ENCODE measurements at regions of chr12 and their contacts with region 1.

Region 1: DNA sequence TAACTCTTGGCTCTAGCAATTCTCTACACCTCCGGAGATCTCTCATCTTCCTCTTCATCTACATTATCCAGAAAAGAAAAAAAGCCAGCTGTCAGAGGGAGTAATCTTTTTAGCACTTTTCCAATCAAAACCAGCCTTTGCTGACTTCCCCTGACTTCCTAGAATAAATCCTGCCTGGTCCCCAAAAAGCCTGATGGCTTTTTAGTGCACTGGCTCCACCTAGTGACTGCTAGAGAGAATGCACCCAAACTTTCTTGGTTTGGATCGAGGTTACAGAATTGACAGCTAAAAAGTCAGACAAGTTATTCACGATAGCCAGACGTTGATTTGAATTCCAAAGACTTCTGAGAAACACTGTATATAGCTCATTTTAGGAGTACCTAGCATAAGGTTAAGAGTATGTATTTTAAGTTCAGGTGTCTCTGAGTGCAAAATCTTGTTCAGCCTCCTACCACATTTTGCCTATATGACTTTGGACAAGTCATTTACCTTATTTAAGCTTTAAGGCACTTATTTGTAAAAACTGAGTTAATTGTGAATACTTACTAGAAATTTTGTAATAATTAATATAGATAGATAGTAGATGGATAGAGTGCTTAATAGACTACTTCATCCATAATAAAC is 185.7 kb upstream of the GRIN2B start:
- DNase-seq: peak; percentile 46 to 61
- H3K4me3 ChIP-seq: no peak overlapping the region
- H3K27ac ChIP-seq: no peak overlapping the region
- H3K4me1 ChIP-seq: no peaks in the 10 kb centered on the region
- H3K27me3 ChIP-seq: no peaks in the 10 kb centered on the region
- CTCF ChIP-seq: peak; percentile 98

Region 2: GRCh38 chr12:12992418-12993130 is 1174.5 kb before region 1 on chr12:
- CTCF ChIA-PET with region 1: no interaction called
- POLR2A ChIA-PET with region 1: no interaction called
- intact Hi-C with region 1: loop called (anchors 5 kb)
- DNase-seq: peak in 1 of 2 experiments; percentile 37
- H3K4me3 ChIP-seq: no peak overlapping the region
- H3K27ac ChIP-seq: peak overlapping the region; percentile 46
- H3K4me1 ChIP-seq: peaks cover 24% of the 10 kb centered on the region
- H3K27me3 ChIP-seq: no peaks in the 10 kb centered on the region
- CTCF ChIP-seq: no peak

Region 3: DNA sequence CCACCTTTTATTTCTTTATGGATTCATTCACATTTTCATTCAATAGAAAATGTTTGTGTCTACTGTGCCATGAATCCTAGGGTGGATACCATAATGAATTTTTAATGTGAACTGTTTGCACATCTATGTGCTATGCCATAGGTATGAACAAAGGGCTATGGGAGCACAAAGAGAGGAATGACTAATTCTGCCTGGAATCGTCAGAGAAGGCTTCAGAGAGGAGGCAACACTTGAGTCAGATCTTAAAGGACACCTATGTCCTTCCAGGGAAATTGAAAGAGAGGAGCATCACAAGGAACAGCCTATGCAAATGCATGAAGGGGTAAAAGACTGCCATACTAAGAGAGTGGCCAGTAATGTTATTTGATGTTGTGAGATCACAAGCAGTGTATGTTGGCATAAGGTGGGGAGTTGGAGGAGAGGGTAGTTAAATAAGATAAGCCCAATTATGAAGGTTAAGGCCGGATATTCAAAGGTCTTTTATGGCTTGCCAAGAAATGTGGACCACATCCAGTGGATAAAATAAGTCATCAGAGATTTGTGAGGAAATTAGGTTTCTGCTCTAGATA is 432.4 kb before region 1 on chr12:
- CTCF ChIA-PET with region 1: no interaction called
- POLR2A ChIA-PET with region 1: no interaction called
- intact Hi-C with region 1: loop called (anchors 5 kb)
- DNase-seq: no peak
- H3K4me3 ChIP-seq: no peak overlapping the region
- H3K27ac ChIP-seq: no peak overlapping the region
- H3K4me1 ChIP-seq: no peaks in the 10 kb centered on the region
- H3K27me3 ChIP-seq: no peaks in the 10 kb centered on the region; the same call in 1 of the 2 replicates
- CTCF ChIP-seq: no peak

Region 4: DNA sequence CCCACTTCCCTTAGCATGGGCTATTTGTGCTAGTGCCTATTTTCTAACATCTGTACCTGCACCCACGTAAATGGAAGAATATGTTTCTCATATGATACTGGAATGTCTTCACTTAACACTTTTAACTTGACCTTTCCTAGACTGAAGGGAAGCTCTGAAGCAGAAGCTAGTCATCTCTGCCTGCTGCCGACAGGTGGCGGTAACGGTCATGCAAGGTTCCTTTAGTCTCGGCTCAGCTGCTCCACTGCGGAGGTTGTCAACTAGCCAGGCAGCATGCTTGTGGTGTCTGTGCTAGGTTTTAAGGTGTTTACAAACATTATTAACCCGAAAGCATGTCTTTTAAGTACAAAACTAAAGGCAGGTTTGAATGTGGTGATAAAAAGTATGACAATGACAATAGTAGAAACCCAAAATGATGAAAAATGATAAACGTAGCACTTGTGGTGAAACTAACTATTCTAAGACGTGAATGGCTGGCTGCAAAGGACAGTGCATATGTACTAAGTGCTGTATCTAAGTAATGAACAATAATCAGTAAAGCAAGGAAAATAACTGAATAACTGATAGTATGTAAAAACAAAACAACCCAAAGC is 302.9 kb before region 1 on chr12:
- CTCF ChIA-PET with region 1: no interaction called
- POLR2A ChIA-PET with region 1: no interaction called
- intact Hi-C with region 1: loop called (anchors 5 kb)
- DNase-seq: peak; percentile 48 to 54
- H3K4me3 ChIP-seq: no peak overlapping the region
- H3K27ac ChIP-seq: no peak overlapping the region
- H3K4me1 ChIP-seq: no peaks in the 10 kb centered on the region
- H3K27me3 ChIP-seq: peaks cover 7% of the 10 kb centered on the region; the same call in 1 of the 2 replicates
- CTCF ChIP-seq: peak; percentile 94

Region 5: DNA sequence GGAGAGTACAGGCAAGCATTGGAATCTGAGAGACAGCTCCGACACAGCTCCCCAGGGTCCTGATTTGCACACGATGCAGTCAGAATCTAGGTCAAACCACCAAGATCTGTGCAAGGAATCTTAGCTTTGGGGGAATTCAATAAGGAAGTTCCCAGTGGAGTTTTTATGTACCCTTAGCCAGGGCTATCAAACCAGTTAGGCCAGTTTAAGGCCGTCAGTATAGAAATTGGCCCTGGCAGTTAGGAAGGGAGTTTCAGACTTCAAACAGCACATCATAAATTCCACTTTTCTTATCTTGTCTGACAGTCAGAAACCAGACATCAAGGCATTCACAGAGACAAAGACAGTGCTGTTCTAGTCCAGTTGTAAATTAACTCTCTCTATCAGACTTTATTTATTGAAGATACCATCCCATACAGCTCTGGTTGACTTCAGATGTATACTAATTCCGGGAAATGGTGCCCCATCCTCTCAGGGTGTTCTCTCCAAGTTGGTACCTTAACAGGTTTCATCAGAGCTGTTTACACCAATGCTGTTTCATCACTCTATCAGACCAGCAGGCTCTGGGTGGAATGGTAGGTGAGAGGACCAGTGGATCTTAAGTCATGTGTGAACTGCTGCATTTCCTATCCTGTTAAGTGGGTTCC is 40.9 kb after region 1 on chr12:
- CTCF ChIA-PET with region 1: no interaction called
- POLR2A ChIA-PET with region 1: no interaction called
- intact Hi-C with region 1: no loop called
- DNase-seq: peak; percentile 63 to 80
- H3K4me3 ChIP-seq: no peak overlapping the region
- H3K27ac ChIP-seq: peak overlapping the region; percentile 60
- H3K4me1 ChIP-seq: peaks cover 29% of the 10 kb centered on the region
- H3K27me3 ChIP-seq: no peaks in the 10 kb centered on the region
- CTCF ChIP-seq: no peak